Transverse colon (tissue), 4 donors: ENCODE measurements at regions of chr15 and their contacts with region 1.

Region 1: DNA sequence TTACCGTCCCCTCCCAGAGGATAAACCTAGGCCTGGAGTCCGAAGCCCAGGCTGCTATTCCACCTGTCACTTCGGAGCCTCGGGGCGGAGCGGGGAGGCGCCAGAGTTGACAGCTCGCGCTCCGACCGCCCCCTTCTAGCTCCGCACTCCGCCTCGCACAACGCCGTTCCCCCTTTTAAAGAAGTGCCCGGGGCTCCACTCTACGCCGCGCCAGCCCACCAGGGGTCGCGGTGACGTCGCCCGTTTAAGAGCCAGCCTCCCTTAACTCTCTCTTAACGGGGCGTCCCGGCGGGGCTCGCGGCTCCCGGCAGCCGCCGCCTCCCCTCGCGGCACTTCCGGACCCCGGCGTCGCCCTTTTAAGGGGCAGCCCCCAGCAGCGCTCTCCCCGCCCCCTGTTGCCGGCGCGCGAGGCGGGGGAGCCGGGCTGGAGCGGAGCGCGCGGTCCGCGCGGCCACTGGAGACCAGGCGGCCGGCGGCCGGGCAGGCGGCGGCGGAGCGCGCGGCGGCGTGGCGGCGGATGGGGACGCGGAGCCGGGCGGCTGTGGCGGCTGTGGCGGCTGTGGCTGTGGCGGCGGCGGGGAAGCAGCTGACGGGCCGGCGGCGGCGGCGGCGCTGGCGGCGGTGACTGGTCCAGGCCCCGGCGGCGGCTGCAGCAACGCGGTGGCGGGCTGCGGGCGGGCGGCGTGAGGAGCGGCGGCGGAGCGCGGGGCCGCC is at the start of gene INAFM2:
- DNase-seq: peak; percentile 90
- H3K4me3 ChIP-seq: peak within 1 kb of the TSS; percentile 41 to 91 (median 78)
- H3K27ac ChIP-seq: peak within 1 kb of the TSS; percentile 89 to 98 (median 96)
- H3K4me1 ChIP-seq: peaks cover 0 to 43% (median 20%) of the 10 kb centered on the region in 4 donors
- H3K27me3 ChIP-seq: no peaks in the 10 kb centered on the region
- CTCF ChIP-seq: peak; percentile 60 to 83 (median 75)
- EP300 ChIP-seq: peak; percentile 42
- POLR2A ChIP-seq: no peak
- total RNA-seq, gene INAFM2: 14.5 to 62.1 (median 19.4) TPM

Region 2: DNA sequence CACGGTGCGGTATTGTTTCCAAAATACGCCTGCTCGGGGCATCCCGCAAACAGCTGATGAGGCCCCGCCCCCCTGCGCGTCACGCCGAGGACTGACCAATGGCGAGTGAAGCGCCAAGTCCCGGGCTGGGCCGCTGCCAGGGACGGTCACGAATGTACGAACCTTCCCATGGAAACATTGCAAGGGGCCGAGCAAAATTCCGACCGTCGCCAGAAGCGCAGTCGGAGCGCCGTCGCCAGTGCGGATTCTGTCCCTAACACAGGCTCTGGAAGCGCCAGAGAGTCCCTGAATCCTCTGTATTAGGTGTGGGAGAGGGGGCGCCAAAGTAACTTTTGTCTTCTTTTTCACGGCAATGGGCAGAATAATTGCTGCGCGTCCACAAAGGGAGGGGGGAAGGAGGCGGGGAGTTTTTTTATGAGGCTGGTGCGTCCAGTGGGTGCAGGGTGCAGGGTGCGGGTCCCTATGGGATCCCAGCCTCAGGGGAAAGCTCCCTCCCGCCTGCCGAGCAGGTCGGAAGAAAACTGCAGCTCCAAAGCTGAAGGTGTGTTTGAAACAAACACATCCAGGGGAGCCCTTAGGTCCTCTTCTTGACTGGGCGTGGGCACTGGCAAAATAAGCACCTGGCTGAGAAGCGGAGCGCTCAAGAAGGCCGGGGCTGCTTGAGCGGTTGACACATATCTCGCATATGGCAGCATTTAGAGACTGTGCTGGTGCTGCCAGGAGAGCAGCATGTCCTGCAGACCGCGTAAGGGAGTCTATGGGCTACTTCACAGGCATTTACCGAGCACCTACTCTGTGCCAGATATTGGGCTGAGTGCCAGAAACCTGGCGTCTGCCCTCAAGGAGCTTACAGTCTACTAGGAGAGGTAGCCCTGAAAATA is 214.3 kb before region 1 on chr15 and contains the start of gene BMF:
- in situ Hi-C with region 1: no loop called
- intact Hi-C with region 1: loop called (anchors 10 kb)
- DNase-seq: peak; percentile 100
- H3K4me3 ChIP-seq: peak within 1 kb of the TSS; percentile 37 to 84 (median 81)
- H3K27ac ChIP-seq: peak within 1 kb of the TSS; percentile 90 to 94 (median 91)
- H3K4me1 ChIP-seq: peaks cover 33 to 51% (median 44%) of the 10 kb centered on the region in 4 donors
- H3K27me3 ChIP-seq: no peaks in the 10 kb centered on the region
- CTCF ChIP-seq: peak in 4 of 5 experiments; percentile 10 to 46 (median 23)
- EP300 ChIP-seq: no peak
- POLR2A ChIP-seq: peak; percentile 58
- total RNA-seq, gene BMF: 13.3 to 35.4 (median 25.1) TPM

Region 3: GRCh38 chr15:40344631-40345120 is 21.3 kb after region 1 on chr15:
- in situ Hi-C with region 1: no loop called
- intact Hi-C with region 1: loop called (anchors 1 kb)
- DNase-seq: peak; percentile 85
- H3K4me3 ChIP-seq: peak overlapping the region in 2 of 4 donors; percentile 8 to 12
- H3K27ac ChIP-seq: peak overlapping the region; percentile 95 to 98 (median 96)
- H3K4me1 ChIP-seq: peaks cover 48 to 93% (median 86%) of the 10 kb centered on the region in 4 donors
- H3K27me3 ChIP-seq: no peaks in the 10 kb centered on the region
- CTCF ChIP-seq: peak; percentile 76 to 88 (median 85)
- EP300 ChIP-seq: no peak
- POLR2A ChIP-seq: peak; percentile 70

Region 4: DNA sequence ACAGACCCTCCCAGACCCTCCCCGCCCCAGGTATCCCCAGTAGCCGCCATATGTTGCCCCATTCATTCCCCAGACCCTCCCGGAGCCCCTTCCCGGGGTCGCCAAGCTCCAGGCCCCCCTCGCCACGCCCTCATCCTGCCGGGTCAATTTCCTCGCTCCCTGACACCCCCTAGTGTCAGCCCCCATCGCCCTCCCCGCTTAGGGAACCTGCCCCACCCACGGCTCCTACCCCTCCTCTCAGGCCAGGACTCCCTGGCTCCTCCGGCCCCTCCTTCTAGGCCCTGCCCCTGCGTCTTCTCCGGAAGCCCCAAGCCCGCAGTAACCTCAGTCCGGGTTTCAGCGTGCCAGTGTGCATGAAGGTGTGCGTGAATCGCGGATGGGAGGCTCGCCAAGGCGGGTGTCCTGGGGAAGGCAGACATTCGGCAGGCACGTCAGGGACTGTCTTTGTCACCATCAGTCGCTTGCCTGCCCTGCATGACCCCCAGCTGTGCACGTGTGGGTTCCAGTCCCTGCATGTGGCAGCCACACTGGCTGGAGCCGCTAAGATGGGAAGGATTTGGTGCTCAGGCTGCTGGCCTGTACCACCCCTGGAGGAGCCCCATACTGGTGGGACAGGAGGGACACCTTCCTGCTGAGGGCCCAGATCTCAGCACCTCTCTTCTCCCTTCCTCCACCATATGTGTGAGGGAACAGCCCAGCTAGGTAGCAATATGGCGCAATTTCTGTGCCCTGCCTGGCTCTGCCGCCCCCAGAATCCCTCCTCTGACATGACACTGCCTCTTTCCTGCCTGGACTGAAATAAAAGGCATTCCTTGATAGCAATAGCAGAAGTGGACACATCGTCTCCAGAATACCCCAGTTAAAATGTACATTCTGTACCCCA is 35.3 kb after region 1 on chr15:
- in situ Hi-C with region 1: no loop called
- intact Hi-C with region 1: loop called (anchors 1 kb)
- DNase-seq: peak; percentile 38
- H3K4me3 ChIP-seq: peak overlapping the region; percentile 18 to 57 (median 32)
- H3K27ac ChIP-seq: peak overlapping the region in 1 of 4 donors; percentile 32
- H3K4me1 ChIP-seq: peaks cover 18 to 47% (median 29%) of the 10 kb centered on the region in 4 donors
- H3K27me3 ChIP-seq: no peaks in the 10 kb centered on the region
- CTCF ChIP-seq: peak in 1 of 5 experiments; percentile 8
- EP300 ChIP-seq: no peak
- POLR2A ChIP-seq: no peak

Region 5: DNA sequence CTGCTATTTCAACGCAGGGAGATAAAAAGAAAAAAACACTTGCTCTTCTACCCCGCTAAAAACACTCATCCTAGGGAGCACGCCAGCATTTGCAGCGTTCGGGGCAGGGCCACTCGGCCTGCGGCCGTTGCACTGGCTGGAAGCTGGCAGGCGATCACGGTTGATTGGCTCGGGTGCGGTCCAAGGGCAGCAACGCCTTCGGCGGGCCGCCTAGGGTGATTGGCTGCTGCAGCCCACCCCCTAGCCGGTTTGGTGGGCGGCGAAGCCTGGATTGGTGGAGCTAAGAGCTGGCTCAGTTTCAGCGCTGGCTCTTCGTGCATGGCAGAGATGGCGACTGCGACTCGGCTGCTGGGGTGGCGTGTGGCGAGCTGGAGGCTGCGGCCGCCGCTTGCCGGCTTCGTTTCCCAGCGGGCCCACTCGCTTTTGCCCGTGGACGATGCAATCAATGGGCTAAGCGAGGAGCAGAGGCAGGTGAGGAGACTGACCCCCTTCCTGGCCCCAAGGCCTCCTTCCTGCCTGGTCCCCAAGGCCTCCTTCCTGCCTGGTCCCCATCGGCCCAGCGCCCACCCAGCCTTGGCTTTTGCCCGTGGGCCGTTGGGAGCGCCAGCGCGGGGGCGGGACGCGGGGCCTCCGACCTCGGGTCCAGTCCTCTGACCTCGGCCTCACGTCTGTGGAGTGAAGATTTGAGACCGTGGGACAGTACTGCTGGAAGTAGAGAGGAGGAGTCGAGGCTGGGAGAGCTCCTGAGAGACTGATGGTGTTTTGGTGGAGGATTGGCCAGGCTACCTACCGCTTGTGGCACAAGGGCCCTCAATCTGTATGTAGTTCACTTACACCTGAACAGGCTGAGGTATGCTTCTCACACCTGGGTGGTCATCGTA is 82.3 kb after region 1 on chr15 and contains the start of gene IVD:
- in situ Hi-C with region 1: loop called in 1 of 4 experiments (anchors 25 kb)
- intact Hi-C with region 1: no loop called
- DNase-seq: peak; percentile 95
- H3K4me3 ChIP-seq: peak within 1 kb of the TSS; percentile 39 to 80 (median 72)
- H3K27ac ChIP-seq: peak within 1 kb of the TSS; percentile 72 to 85 (median 84)
- H3K4me1 ChIP-seq: peaks cover 5 to 25% (median 16%) of the 10 kb centered on the region in 4 donors
- H3K27me3 ChIP-seq: no peaks in the 10 kb centered on the region
- CTCF ChIP-seq: no peak
- EP300 ChIP-seq: no peak
- POLR2A ChIP-seq: peak; percentile 79
- total RNA-seq, gene IVD: 51.4 to 122 (median 58.7) TPM

Region 6: GRCh38 chr15:40859206-40859851 is 535.9 kb after region 1 on chr15:
- in situ Hi-C with region 1: no loop called
- intact Hi-C with region 1: no loop called
- DNase-seq: peak; percentile 92
- H3K4me3 ChIP-seq: no peak overlapping the region
- H3K27ac ChIP-seq: peak overlapping the region; percentile 55 to 83 (median 65)
- H3K4me1 ChIP-seq: peaks cover 3 to 57% (median 47%) of the 10 kb centered on the region in 4 donors
- H3K27me3 ChIP-seq: no peaks in the 10 kb centered on the region
- CTCF ChIP-seq: peak; percentile 72 to 92 (median 76)
- EP300 ChIP-seq: no peak
- POLR2A ChIP-seq: peak; percentile 37